ENCODE measurements at regions of chr11 and their contacts with region 1.

Region 1: DNA sequence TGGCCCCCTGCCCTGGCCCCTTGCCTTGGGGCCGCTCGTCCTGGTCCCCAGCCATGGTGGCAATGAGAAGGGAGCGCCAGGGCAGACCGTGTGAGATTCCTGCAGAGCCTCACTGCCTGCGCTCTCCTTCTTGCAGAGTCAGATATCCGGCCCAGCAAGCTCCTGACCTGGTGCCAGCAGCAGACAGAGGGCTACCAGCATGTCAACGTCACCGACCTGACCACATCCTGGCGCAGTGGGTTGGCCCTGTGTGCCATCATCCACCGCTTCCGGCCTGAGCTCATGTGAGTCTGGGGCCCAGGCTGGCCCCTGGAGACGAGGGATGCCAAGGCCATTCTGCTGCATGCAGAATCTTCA is 114.1 kb downstream of the MICAL2 start:
- DNase-seq: peak; percentile 97
- H3K4me3 Mint-ChIP-seq: peak overlapping the region; percentile 64
- H3K27ac Mint-ChIP-seq: peak overlapping the region; percentile 82
- H3K4me1 Mint-ChIP-seq: peaks cover 31% of the 10 kb centered on the region
- H3K27me3 Mint-ChIP-seq: no peaks in the 10 kb centered on the region

Region 2: GRCh38 chr11:12149672-12150225 is 74.8 kb before region 1 on chr11:
- CTCF ChIA-PET with region 1: no interaction called
- intact Hi-C with region 1: loop called (anchors 1 kb)
- DNase-seq: peak; percentile 80
- H3K4me3 Mint-ChIP-seq: peak overlapping the region; percentile 3
- H3K27ac Mint-ChIP-seq: peak overlapping the region; percentile 87
- H3K4me1 Mint-ChIP-seq: peaks cover 48% of the 10 kb centered on the region
- H3K27me3 Mint-ChIP-seq: no peaks in the 10 kb centered on the region

Region 3: DNA sequence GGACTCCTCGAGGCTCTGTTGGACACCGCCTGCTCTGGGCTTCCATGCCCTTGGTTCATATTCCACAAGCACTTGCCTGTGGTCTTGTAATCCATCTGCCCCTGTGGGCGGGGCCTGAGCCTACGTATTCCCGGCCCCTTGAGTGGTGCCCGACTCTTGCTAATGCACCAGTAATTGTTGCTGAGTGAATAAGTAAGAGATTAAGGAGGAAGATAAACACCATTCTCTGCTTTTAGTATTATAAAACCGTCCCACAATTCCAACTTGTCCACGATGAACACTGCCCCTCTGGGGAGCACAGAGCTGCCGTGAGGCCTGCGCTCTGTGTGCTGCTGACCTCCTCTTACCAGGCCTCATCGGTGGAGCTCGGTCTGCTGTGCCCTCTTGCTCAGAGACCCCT is 63.8 kb before region 1 on chr11:
- CTCF ChIA-PET with region 1: no interaction called
- intact Hi-C with region 1: no loop called
- DNase-seq: no peak
- H3K4me3 Mint-ChIP-seq: no peak overlapping the region
- H3K27ac Mint-ChIP-seq: no peak overlapping the region
- H3K4me1 Mint-ChIP-seq: peaks cover 42% of the 10 kb centered on the region
- H3K27me3 Mint-ChIP-seq: no peaks in the 10 kb centered on the region

Region 4: DNA sequence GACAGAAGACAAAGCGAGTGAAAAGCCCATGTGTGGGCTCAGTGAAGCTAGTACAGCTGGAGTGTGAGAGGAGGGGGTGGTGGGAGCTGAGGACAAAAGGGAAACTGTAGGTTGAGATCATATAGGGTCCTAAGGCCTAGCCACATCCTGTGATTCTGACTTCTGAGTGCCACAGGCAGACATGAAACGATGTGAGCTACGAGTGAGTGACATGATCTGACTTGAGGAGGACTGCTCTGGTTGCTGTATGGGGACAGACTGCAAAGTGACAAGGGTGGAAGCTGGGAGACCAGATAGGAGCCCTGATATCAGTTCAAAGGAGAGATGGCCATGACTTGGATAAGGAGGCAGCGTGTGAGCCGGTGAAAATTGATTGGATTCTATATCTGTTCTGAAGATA is 28.7 kb before region 1 on chr11:
- CTCF ChIA-PET with region 1: interaction called, 4 read pairs
- intact Hi-C with region 1: loop called (anchors 1 kb)
- DNase-seq: peak; percentile 72
- H3K4me3 Mint-ChIP-seq: peak overlapping the region; percentile 79
- H3K27ac Mint-ChIP-seq: peak overlapping the region; percentile 90
- H3K4me1 Mint-ChIP-seq: peaks cover 70% of the 10 kb centered on the region
- H3K27me3 Mint-ChIP-seq: no peaks in the 10 kb centered on the region

Region 5: GRCh38 chr11:12354750-12355545 is 130.4 kb after region 1 on chr11:
- CTCF ChIA-PET with region 1: no interaction called
- intact Hi-C with region 1: no loop called
- DNase-seq: no peak
- H3K4me3 Mint-ChIP-seq: no peak overlapping the region
- H3K27ac Mint-ChIP-seq: no peak overlapping the region
- H3K4me1 Mint-ChIP-seq: peaks cover 41% of the 10 kb centered on the region
- H3K27me3 Mint-ChIP-seq: no peaks in the 10 kb centered on the region